Activated naive CD4-positive, alpha-beta T cell treated with anti-CD3 and anti-CD28 coated beads for 36 hours (primary cell): ENCODE measurements at regions of chr22 and their contacts with region 1.

Region 1: DNA sequence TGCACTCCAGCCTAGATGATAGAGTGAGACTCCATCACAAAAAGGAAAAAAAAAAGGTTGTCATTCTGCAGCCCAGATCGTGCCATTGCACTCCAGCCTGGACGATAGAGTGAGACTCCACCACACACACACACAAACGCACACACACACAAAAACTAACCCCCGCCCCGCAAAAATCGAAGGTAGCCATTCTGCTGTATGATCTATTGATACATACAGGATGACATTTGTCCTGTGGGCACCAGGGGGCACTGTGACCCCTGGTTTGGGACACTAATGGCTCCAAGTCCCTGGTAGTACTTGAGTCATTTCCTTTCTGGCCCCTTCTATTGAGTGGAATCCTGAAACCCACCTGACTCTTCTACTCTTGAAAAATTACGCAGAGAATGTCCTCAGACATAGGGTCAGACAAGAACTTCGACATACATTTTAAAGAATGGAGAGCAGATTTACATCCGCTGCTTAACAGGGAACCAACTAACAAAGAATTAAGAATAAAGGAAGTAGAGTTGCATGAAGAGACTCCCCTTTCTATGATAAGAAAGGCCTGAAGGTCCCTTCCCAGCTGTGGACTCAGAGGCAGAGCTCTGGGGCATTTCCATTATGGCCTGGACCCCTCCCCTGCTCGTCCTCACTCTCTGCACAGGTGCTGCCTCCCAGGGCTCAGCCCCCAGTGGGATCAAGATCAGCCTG is 35.0 kb upstream of the PRAME start:
- DNase-seq: peak; percentile 72
- H3K4me3 Mint-ChIP-seq: no peak overlapping the region
- H3K27ac Mint-ChIP-seq: no peak overlapping the region
- H3K4me1 Mint-ChIP-seq: peaks cover 4% of the 10 kb centered on the region
- H3K27me3 Mint-ChIP-seq: no peaks in the 10 kb centered on the region

Region 2: DNA sequence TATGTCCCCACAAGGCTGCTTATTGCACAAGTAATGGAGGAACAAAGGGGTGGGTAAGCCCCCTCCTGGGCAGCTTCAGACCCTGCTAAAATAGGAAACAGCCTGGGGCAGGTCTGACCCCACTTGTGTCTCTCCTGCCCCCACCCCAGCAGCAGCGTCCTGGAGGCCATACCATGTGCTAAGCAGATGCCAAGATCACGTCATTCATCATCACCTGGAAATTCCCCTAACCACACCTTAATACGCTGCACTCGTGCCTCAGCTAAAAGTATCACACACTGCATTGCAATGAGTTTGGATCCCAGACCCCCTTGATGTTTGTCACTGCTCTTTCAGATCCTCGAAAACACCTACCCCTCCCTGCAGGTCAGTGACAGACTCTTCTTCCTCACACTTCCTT is 22.5 kb after region 1 on chr22:
- CTCF ChIA-PET with region 1: no interaction called
- intact Hi-C with region 1: loop called (anchors 2 kb)
- DNase-seq: peak; percentile 53
- H3K4me3 Mint-ChIP-seq: no peak overlapping the region
- H3K27ac Mint-ChIP-seq: no peak overlapping the region
- H3K4me1 Mint-ChIP-seq: peaks cover 10% of the 10 kb centered on the region
- H3K27me3 Mint-ChIP-seq: no peaks in the 10 kb centered on the region

Region 3: GRCh38 chr22:23036684-23037428 is 442.7 kb after region 1 on chr22:
- CTCF ChIA-PET with region 1: no interaction called
- intact Hi-C with region 1: no loop called
- DNase-seq: peak; percentile 15
- H3K4me3 Mint-ChIP-seq: no peak overlapping the region
- H3K27ac Mint-ChIP-seq: no peak overlapping the region
- H3K4me1 Mint-ChIP-seq: peaks cover 13% of the 10 kb centered on the region
- H3K27me3 Mint-ChIP-seq: peaks cover 9% of the 10 kb centered on the region